ENCODE measurements at regions of chr19 and their contacts with region 1.

Region 1: GRCh38 chr19:7680606-7681339 is at the start of gene TRAPPC5:
- DNase-seq: peak; percentile 80 to 89 (median 86)
- H3K4me3 ChIP-seq: peak within 1 kb of the TSS; percentile 73 to 88
- H3K4me3 Mint-ChIP-seq: peak within 1 kb of the TSS; percentile 86 to 96 (median 92)
- H3K27ac ChIP-seq: peak within 1 kb of the TSS; percentile 82
- H3K27ac Mint-ChIP-seq: peak within 1 kb of the TSS; percentile 91 to 96 (median 95)
- H3K4me1 ChIP-seq: peaks cover 42% of the 10 kb centered on the region
- H3K4me1 Mint-ChIP-seq: peaks cover 21 to 58% (median 39%) of the 10 kb centered on the region in 4 donors
- H3K27me3 ChIP-seq: peaks cover 6% of the 10 kb centered on the region
- H3K27me3 Mint-ChIP-seq: peaks cover 11 to 21% of the 10 kb centered on the region in 2 donors
- total RNA-seq, gene TRAPPC5: 60.7 to 62.1 TPM

Region 2: DNA sequence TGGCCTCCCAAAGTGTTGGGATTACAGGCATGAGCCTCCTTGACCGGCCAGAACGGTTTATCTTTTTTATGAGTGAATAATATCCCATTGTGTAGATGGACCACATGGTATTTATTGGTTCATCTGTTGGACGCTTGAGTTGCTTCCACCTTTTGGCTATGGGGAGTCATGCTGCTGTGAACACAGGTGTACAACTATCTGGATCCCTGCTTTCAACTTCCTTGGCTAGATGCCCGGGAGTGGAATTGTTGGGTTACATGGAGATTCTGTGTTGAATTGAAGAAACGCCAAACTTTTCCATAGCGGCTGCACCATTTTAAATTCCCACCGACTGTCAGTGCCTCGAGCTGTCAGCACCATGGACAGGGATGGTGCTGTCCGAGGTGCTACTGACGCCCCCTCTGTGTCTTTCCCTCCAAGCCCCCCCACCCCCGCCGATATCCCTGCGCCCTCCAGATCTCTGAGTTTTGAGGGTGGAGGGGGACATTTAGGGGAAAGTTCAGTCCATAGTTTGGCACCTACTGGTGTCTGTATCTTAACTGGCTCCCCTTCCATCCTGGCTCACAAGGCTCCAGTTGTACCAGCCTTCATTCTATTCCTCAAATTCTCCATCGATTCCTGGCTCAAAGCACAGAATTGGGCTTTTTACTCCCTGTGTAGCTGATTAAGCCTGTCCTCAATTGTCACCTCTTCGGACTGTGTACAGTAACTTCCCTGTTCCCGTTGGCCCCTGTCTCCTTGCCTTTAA is 118.0 kb before region 1 on chr19:
- CTCF ChIA-PET with region 1: interaction called, 21 read pairs
- POLR2A ChIA-PET with region 1: interaction called, 5 read pairs
- intact Hi-C with region 1: no loop called
- DNase-seq: peak in 1 of 5 donors; percentile 5
- H3K4me3 ChIP-seq: no peak overlapping the region
- H3K4me3 Mint-ChIP-seq: no peak overlapping the region
- H3K27ac ChIP-seq: no peak overlapping the region
- H3K27ac Mint-ChIP-seq: no peak overlapping the region
- H3K4me1 ChIP-seq: no peaks in the 10 kb centered on the region
- H3K4me1 Mint-ChIP-seq: no peaks in the 10 kb centered on the region
- H3K27me3 ChIP-seq: no peaks in the 10 kb centered on the region
- H3K27me3 Mint-ChIP-seq: no peaks in the 10 kb centered on the region

Region 3: DNA sequence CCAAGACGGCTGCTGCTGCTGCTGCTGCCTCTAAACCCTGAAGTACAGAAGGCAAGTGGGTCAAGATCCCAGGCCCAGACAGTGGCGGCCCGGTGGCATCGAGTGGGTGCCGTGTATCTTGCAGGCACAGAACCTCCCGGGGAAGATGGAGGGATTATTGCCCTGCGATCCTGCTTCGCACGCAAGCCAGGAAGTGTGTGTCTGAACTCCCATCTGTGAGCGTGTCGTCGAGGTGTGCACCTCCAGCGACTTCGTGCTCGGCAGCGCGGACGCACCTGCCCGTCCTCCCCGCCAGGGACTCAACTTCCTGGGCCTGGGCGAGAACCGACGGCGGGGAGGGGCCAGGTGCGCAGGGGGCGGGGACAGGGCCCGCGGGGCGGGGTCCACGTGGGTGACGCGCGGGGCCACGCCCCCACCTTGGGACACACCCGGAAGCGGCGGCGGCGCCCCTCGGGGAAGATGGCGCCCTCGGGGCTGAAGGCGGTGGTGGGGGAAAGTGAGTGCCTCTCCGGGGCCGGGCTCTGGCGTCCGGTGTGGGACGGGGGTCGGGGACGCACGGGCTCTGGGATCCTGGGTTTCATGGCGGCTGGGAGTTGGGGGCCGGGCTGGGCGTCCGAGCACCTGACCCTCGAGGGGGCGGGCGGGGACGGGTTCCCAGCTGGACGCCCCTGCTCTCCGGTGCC is 43.9 kb before region 1 on chr19 and contains the start of gene STXBP2:
- CTCF ChIA-PET with region 1: interaction called, 7 read pairs
- POLR2A ChIA-PET with region 1: interaction called, 3 read pairs
- intact Hi-C with region 1: loop called (anchors 1 kb)
- DNase-seq: peak; percentile 91 to 93 (median 92)
- H3K4me3 ChIP-seq: peak within 1 kb of the TSS; percentile 42 to 74
- H3K4me3 Mint-ChIP-seq: peak within 1 kb of the TSS; percentile 82 to 89 (median 84)
- H3K27ac ChIP-seq: peak within 1 kb of the TSS; percentile 77
- H3K27ac Mint-ChIP-seq: peak within 1 kb of the TSS; percentile 84 to 95 (median 94)
- H3K4me1 ChIP-seq: peaks cover 36% of the 10 kb centered on the region
- H3K4me1 Mint-ChIP-seq: peaks cover 20 to 52% (median 34%) of the 10 kb centered on the region in 4 donors
- H3K27me3 ChIP-seq: no peaks in the 10 kb centered on the region
- H3K27me3 Mint-ChIP-seq: no peaks in the 10 kb centered on the region
- total RNA-seq, gene STXBP2: 219 to 220 TPM

Region 4: DNA sequence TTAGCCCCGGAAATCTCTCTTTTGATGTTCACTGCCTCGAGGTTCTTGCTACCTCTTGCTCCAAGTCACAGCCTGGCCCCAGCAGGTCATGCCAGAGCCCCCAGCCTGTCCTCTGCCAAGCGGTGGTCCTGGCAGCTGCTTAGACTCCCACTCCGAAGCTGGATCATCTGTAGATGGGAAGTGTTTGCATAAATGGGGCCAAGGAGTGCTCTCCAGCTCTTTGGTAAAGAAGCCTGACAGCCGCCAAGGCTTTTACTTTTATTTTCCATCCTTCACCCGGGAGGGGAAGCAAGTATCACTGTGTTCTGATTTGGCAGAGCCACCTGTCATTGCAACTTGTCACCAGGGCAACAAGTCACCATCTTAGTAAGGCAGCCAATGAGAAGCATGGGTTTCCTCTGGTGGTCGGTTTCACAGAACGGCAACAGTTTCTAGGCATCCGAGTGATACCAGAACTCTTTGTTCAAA is 22.5 kb before region 1 on chr19:
- CTCF ChIA-PET with region 1: interaction called, 22 read pairs
- POLR2A ChIA-PET with region 1: interaction called, 4 read pairs
- intact Hi-C with region 1: no loop called
- DNase-seq: peak; percentile 45 to 70 (median 56)
- H3K4me3 ChIP-seq: peak overlapping the region; percentile 29 to 38
- H3K4me3 Mint-ChIP-seq: peak overlapping the region; percentile 57 to 79 (median 72)
- H3K27ac ChIP-seq: peak overlapping the region; percentile 36
- H3K27ac Mint-ChIP-seq: peak overlapping the region; percentile 24 to 92 (median 75)
- H3K4me1 ChIP-seq: peaks cover 17% of the 10 kb centered on the region
- H3K4me1 Mint-ChIP-seq: peaks cover 5 to 16% (median 7%) of the 10 kb centered on the region in 4 donors
- H3K27me3 ChIP-seq: no peaks in the 10 kb centered on the region
- H3K27me3 Mint-ChIP-seq: no peaks in the 10 kb centered on the region

Region 5: DNA sequence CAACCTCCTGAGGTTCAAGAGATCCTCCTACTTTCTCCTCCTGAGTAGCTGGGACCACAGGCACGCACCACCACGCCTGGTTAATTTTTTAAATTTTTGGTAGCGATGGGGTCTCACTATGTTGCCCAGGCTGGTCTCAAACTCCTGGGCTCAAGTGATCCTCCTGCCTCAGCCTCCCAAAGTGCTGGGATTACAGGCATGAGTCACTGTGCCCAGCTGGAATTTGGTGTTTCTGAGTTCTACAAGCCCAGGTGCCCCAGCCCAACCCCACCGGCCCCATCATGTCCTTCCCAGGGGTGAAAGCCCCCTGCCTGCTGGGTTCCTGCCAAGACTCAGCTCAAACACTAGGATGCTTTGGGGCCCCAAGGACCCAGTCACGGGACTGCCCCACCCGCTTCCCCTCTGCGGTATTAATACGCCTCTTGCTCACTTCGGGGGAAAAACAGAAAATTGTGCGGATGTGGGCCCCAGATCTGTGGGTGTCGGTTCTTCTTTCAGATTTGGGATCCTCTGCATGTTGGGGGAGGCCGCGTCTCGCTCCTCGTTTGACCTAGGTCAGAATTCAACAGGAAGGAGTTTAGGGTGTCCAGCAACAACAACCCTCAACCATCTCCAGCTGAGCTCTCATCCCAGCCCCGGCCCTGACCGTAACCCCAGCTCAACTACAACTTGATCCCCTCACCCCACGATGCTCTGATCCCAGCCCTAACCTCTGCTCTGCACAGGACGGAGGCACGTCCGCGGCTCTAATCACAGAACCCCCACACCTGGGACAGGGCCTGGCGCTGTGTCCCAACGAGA is 24.8 kb after region 1 on chr19:
- CTCF ChIA-PET with region 1: interaction called, 15 read pairs
- POLR2A ChIA-PET with region 1: interaction called, 29 read pairs
- intact Hi-C with region 1: loop called (anchors 2 kb)
- DNase-seq: peak; percentile 73 to 83 (median 76)
- H3K4me3 ChIP-seq: peak overlapping the region; percentile 30 to 45
- H3K4me3 Mint-ChIP-seq: peak overlapping the region; percentile 76 to 90 (median 84)
- H3K27ac ChIP-seq: peak overlapping the region; percentile 72
- H3K27ac Mint-ChIP-seq: peak overlapping the region; percentile 87 to 98 (median 98)
- H3K4me1 ChIP-seq: peaks cover 38% of the 10 kb centered on the region
- H3K4me1 Mint-ChIP-seq: peaks cover 19 to 51% (median 33%) of the 10 kb centered on the region in 4 donors
- H3K27me3 ChIP-seq: no peaks in the 10 kb centered on the region
- H3K27me3 Mint-ChIP-seq: no peaks in the 10 kb centered on the region